SK-N-SH (cell line): ENCODE measurements at regions of chr18 and their contacts with region 1.

Region 1: DNA sequence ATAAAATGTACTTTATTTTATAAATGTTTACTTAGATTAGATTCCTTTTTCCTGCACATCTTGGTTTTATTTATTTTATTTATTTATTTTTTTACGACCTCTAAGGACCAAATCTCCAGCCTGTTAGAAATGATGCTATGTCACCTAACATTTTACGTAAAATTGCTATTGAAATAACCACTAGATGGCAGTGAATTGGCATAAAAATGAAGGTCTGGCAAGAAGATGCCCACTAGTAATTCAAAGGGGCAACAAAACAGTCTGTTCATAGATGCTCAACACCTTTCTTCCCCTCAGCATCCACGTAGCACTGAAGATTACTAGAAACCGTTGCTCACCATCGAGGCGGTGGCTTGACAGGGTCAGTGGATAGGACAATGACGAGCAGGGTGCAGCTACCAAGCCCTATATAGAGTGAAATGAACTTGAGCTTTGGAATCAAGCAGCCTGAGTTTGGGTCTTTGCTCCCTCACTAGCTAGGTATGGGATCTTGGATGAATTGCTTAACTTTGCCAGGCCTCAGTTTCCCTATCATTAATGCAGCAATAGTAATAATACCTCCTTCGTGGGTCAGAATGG is 128.7 kb upstream of the L3MBTL4 start:
- DNase-seq: peak; percentile 37
- H3K4me3 ChIP-seq: no peak overlapping the region; a peak in 1 of 4 replicates
- H3K27ac ChIP-seq: no peak overlapping the region
- H3K4me1 ChIP-seq: peaks cover 0 to 2% of the 10 kb centered on the region in 2 experiments; a peak in 1 of 4 replicates
- H3K27me3 ChIP-seq: no peaks in the 10 kb centered on the region
- CTCF ChIP-seq: peak; percentile 76
- EP300 ChIP-seq: no peak
- RAD21 ChIP-seq: peak; percentile 88

Region 2: DNA sequence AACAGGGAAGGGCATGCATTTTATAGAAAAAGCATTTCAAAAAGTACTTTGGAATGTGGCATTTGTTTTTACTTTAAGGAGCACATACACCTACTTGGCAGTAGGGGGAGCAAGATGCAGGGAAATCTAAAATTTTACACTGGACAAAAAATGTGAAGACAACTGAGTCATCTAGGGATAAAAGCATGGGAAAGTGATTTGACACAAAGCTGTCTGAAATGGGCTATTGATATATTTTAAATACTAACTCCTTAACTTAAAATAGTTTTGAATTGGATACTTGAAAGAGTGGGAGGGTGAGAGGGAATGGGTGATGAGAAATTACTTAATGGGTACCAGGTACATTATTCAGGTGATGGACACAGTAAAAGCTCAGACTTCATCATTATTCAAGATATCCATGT is 663.9 kb before region 1 on chr18:
- CTCF ChIA-PET with region 1: interaction called, 23 read pairs
- POLR2A ChIA-PET with region 1: no interaction called
- DNase-seq: peak; percentile 39
- H3K4me3 ChIP-seq: peak overlapping the region in 1 of 2 experiments; percentile 7; a peak in 1 of 4 replicates
- H3K27ac ChIP-seq: no peak overlapping the region
- H3K4me1 ChIP-seq: no peaks in the 10 kb centered on the region
- H3K27me3 ChIP-seq: no peaks in the 10 kb centered on the region
- CTCF ChIP-seq: peak; percentile 85
- EP300 ChIP-seq: no peak
- RAD21 ChIP-seq: peak; percentile 86

Region 3: DNA sequence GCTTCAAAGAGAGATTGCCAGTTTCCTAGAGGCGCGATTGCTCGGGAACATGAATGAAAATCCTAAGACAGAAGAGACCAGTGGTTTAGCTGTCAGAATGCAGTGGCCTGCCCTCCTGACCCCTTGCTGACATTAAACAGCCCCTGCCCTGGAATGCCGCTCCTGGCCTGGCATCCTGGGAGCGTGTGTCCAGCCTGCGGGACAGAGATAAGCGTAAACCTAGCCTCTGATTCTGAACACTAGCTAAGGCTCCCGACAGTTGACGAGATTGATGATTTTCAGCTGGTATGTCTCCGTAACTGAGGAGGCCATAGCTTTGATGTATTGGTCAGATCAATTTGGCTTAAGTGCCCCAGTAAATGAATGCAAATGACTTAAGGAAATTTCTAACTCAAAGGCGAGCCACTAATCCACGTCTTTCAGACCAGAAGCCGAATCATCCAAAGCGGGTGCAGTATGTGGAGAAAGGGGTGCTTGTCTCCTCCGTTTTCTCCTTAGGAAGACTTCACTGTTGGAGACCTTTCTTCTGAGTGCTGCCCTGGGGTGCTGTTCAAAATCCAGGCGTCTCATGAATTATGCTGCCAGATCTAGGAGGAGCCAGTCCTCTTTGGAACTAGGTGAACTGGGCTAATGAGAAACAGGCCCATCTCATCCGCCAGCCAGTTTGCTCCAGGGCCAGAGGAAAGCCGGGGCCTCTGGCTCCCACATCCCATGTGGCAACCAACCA is 13.8 kb after region 1 on chr18:
- CTCF ChIA-PET with region 1: interaction called, 18 read pairs
- POLR2A ChIA-PET with region 1: no interaction called
- DNase-seq: peak; percentile 78
- H3K4me3 ChIP-seq: no peak overlapping the region; a peak in 1 of 4 replicates
- H3K27ac ChIP-seq: peak overlapping the region in 1 of 2 experiments; percentile 96; a peak in 2 of 4 replicates
- H3K4me1 ChIP-seq: peaks cover 0 to 35% of the 10 kb centered on the region in 2 experiments; a peak in 2 of 4 replicates
- H3K27me3 ChIP-seq: no peaks in the 10 kb centered on the region
- CTCF ChIP-seq: no peak
- EP300 ChIP-seq: peak in 1 of 2 experiments; percentile 91; a peak in 2 of 4 replicates
- RAD21 ChIP-seq: peak; percentile 17; the same call in 1 of the 2 replicates

Region 4: GRCh38 chr18:6874316-6874715 is 330.9 kb after region 1 on chr18:
- CTCF ChIA-PET with region 1: interaction called, 20 read pairs
- POLR2A ChIA-PET with region 1: no interaction called
- DNase-seq: no peak
- H3K4me3 ChIP-seq: no peak overlapping the region
- H3K27ac ChIP-seq: no peak overlapping the region
- H3K4me1 ChIP-seq: peaks cover 0 to 4% of the 10 kb centered on the region in 2 experiments; a peak in 2 of 4 replicates
- H3K27me3 ChIP-seq: no peaks in the 10 kb centered on the region
- CTCF ChIP-seq: peak; percentile 43
- EP300 ChIP-seq: no peak
- RAD21 ChIP-seq: peak; percentile 66

Region 5: DNA sequence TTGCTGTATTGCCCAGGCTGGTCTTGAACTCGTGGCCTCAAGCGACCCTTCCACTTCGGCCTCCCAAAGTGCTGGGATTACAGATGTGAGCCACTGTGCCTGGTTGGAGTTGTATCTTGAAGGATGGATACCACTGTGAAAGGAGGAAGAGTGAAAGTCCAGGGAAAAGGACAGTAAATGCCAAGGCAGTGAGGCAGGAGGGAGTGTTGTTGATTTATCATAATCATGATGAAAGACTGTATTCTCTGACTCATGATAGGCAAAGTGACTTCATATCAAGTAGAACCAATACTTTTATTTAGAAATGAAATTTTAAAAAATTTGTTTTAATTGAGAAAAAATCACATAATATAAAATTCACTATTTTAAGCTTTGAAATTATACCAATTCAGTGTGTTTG is 348.4 kb after region 1 on chr18:
- CTCF ChIA-PET with region 1: interaction called, 100 read pairs
- POLR2A ChIA-PET with region 1: no interaction called
- DNase-seq: no peak
- H3K4me3 ChIP-seq: no peak overlapping the region
- H3K27ac ChIP-seq: no peak overlapping the region
- H3K4me1 ChIP-seq: no peaks in the 10 kb centered on the region; a peak in 1 of 4 replicates
- H3K27me3 ChIP-seq: no peaks in the 10 kb centered on the region
- CTCF ChIP-seq: no peak
- EP300 ChIP-seq: no peak
- RAD21 ChIP-seq: no peak